Activated B cell treated with CpG ODN at 0.5 μM for 24 hours (primary cell): ENCODE measurements at regions of chr7 and their contacts with region 1.

Region 1: GRCh38 chr7:75738987-75739795 is 450 bp upstream of the HIP1 start:
- DNase-seq: peak; percentile 97
- ATAC-seq: peak; percentile 91
- H3K4me3 Mint-ChIP-seq: peak overlapping the region; percentile 96
- H3K27ac Mint-ChIP-seq: peak overlapping the region; percentile 97
- H3K4me1 Mint-ChIP-seq: peaks cover 38% of the 10 kb centered on the region
- H3K27me3 Mint-ChIP-seq: no peaks in the 10 kb centered on the region
- CTCF ChIP-seq: no peak

Region 2: DNA sequence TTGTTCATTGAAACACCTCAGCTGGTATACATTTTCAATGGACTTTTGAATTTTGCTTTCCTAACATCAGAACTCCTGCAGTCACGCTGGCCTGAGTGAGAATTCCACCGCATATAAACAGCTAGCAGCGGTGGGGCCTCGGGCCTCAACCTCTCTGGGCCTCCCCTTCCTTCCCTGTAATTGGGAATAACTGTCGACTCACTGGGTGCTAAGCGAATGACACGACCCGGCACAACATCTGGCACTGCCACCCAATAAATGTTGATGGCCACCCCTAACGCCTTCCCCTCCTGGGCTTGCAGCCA is 666.3 kb before region 1 on chr7:
- CTCF ChIA-PET with region 1: no interaction called
- POLR2A ChIA-PET with region 1: interaction called, 5 read pairs
- intact Hi-C with region 1: loop called (anchors 10 kb)
- DNase-seq: no peak
- ATAC-seq: no peak
- H3K4me3 Mint-ChIP-seq: peak overlapping the region; percentile 96
- H3K27ac Mint-ChIP-seq: peak overlapping the region; percentile 96
- H3K4me1 Mint-ChIP-seq: peaks cover 13% of the 10 kb centered on the region
- H3K27me3 Mint-ChIP-seq: no peaks in the 10 kb centered on the region
- CTCF ChIP-seq: no peak

Region 3: GRCh38 chr7:75617634-75618234 is 121.5 kb before region 1 on chr7:
- CTCF ChIA-PET with region 1: no interaction called
- POLR2A ChIA-PET with region 1: interaction called, 10 read pairs
- intact Hi-C with region 1: loop called (anchors 2 kb)
- DNase-seq: peak; percentile 50
- ATAC-seq: peak; percentile 83
- H3K4me3 Mint-ChIP-seq: peak overlapping the region; percentile 83
- H3K27ac Mint-ChIP-seq: peak overlapping the region; percentile 92
- H3K4me1 Mint-ChIP-seq: peaks cover 64% of the 10 kb centered on the region
- H3K27me3 Mint-ChIP-seq: no peaks in the 10 kb centered on the region
- CTCF ChIP-seq: no peak

Region 4: GRCh38 chr7:75662579-75663301 is 76.5 kb before region 1 on chr7:
- CTCF ChIA-PET with region 1: interaction called, 6 read pairs
- POLR2A ChIA-PET with region 1: interaction called, 49 read pairs
- intact Hi-C with region 1: loop called (anchors 1 kb)
- DNase-seq: peak; percentile 44
- ATAC-seq: peak; percentile 88
- H3K4me3 Mint-ChIP-seq: peak overlapping the region; percentile 55
- H3K27ac Mint-ChIP-seq: peak overlapping the region; percentile 84
- H3K4me1 Mint-ChIP-seq: peaks cover 29% of the 10 kb centered on the region
- H3K27me3 Mint-ChIP-seq: no peaks in the 10 kb centered on the region
- CTCF ChIP-seq: no peak

Region 5: GRCh38 chr7:75688200-75689136 is 50.7 kb before region 1 on chr7:
- CTCF ChIA-PET with region 1: no interaction called
- POLR2A ChIA-PET with region 1: interaction called, 12 read pairs
- intact Hi-C with region 1: loop called (anchors 2 kb)
- DNase-seq: peak; percentile 40
- ATAC-seq: peak; percentile 70
- H3K4me3 Mint-ChIP-seq: peak overlapping the region; percentile 59
- H3K27ac Mint-ChIP-seq: peak overlapping the region; percentile 30
- H3K4me1 Mint-ChIP-seq: peaks cover 48% of the 10 kb centered on the region
- H3K27me3 Mint-ChIP-seq: peaks cover 5% of the 10 kb centered on the region
- CTCF ChIP-seq: no peak

Region 6: GRCh38 chr7:75878769-75879611 is 139.8 kb after region 1 on chr7 and contains the start of gene RHBDD2:
- CTCF ChIA-PET with region 1: no interaction called
- POLR2A ChIA-PET with region 1: no interaction called
- intact Hi-C with region 1: loop called (anchors 1 kb)
- DNase-seq: peak; percentile 89
- ATAC-seq: peak; percentile 98
- H3K4me3 Mint-ChIP-seq: peak within 1 kb of the TSS; percentile 97
- H3K27ac Mint-ChIP-seq: peak within 1 kb of the TSS; percentile 94
- H3K4me1 Mint-ChIP-seq: peaks cover 26% of the 10 kb centered on the region
- H3K27me3 Mint-ChIP-seq: no peaks in the 10 kb centered on the region
- CTCF ChIP-seq: no peak
- total RNA-seq, gene RHBDD2: 28.4 and 32.8 TPM in 2 replicates

Region 7: DNA sequence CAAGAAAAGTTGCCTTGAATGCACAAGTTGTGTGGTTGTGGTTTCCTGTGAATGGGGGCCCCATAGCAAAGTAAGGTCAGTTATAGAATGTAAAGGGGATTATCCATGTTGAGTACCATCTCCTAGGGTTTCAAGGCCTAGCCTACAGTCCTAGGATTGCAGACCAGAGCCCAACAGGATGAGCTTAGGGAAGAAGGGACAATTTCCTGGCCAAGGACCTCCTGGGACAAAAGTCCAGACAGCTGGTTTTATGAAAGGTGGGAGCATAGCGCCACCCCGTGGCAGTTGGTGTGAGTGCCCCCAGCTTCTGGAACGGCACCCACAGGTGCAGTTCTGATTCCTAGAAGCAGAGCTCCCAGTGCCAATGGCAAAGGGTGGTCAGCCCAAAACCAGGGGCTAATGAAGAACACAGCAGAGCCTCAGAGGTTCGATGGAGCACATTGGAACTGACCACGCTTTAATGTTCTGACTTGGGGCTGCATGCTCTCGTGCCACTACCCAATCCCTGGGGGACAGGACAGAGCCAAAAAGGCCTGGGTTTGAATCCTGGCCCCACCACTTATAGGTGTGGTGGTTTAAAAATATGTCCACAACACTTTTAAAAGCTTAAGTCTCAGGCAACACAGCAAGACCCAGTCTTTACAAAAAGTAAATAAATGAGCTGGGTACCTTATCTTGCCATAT is 281.0 kb after region 1 on chr7:
- CTCF ChIA-PET with region 1: no interaction called
- POLR2A ChIA-PET with region 1: no interaction called
- intact Hi-C with region 1: no loop called
- DNase-seq: peak; percentile 52
- ATAC-seq: peak; percentile 64
- H3K4me3 Mint-ChIP-seq: no peak overlapping the region
- H3K27ac Mint-ChIP-seq: peak overlapping the region; percentile 24
- H3K4me1 Mint-ChIP-seq: peaks cover 16% of the 10 kb centered on the region
- H3K27me3 Mint-ChIP-seq: no peaks in the 10 kb centered on the region
- CTCF ChIP-seq: no peak